Activated CD4-positive, alpha-beta memory T cell treated with anti-CD3 and anti-CD28 coated beads for 36 hours (primary cell): ENCODE measurements at regions of chr1 and their contacts with region 1.

Region 1: GRCh38 chr1:245045087-245045881 is 109.5 kb upstream of the KIF26B start:
- DNase-seq: no peak
- H3K4me3 Mint-ChIP-seq: no peak overlapping the region
- H3K27ac Mint-ChIP-seq: no peak overlapping the region
- H3K4me1 Mint-ChIP-seq: no peaks in the 10 kb centered on the region
- H3K27me3 Mint-ChIP-seq: no peaks in the 10 kb centered on the region

Region 2: GRCh38 chr1:244599937-244600350 is 445.3 kb before region 1 on chr1:
- CTCF ChIA-PET with region 1: interaction called, 39 read pairs
- POLR2A ChIA-PET with region 1: no interaction called
- intact Hi-C with region 1: loop called (anchors 1 kb)
- DNase-seq: peak; percentile 76
- H3K4me3 Mint-ChIP-seq: peak overlapping the region; percentile 70
- H3K27ac Mint-ChIP-seq: peak overlapping the region; percentile 88
- H3K4me1 Mint-ChIP-seq: peaks cover 24% of the 10 kb centered on the region
- H3K27me3 Mint-ChIP-seq: peaks cover 4% of the 10 kb centered on the region

Region 3: GRCh38 chr1:244801246-244801645 is 244.0 kb before region 1 on chr1:
- CTCF ChIA-PET with region 1: interaction called, 84 read pairs
- POLR2A ChIA-PET with region 1: interaction called, 5 read pairs
- intact Hi-C with region 1: loop called (anchors 1 kb)
- DNase-seq: peak; percentile 66
- H3K4me3 Mint-ChIP-seq: no peak overlapping the region
- H3K27ac Mint-ChIP-seq: no peak overlapping the region
- H3K4me1 Mint-ChIP-seq: peaks cover 2% of the 10 kb centered on the region
- H3K27me3 Mint-ChIP-seq: peaks cover 2% of the 10 kb centered on the region

Region 4: GRCh38 chr1:244843148-244843978 is 201.9 kb before region 1 on chr1:
- CTCF ChIA-PET with region 1: interaction called, 12 read pairs
- POLR2A ChIA-PET with region 1: interaction called, 6 read pairs
- intact Hi-C with region 1: no loop called
- DNase-seq: no peak
- H3K4me3 Mint-ChIP-seq: no peak overlapping the region
- H3K27ac Mint-ChIP-seq: peak overlapping the region; percentile 18
- H3K4me1 Mint-ChIP-seq: peaks cover 68% of the 10 kb centered on the region
- H3K27me3 Mint-ChIP-seq: no peaks in the 10 kb centered on the region

Region 5: GRCh38 chr1:244864253-244865027 is 180.8 kb before region 1 on chr1 and contains the start of gene HNRNPU:
- CTCF ChIA-PET with region 1: interaction called, 8 read pairs
- POLR2A ChIA-PET with region 1: interaction called, 3 read pairs
- intact Hi-C with region 1: loop called (anchors 2 kb)
- DNase-seq: peak; percentile 97
- H3K4me3 Mint-ChIP-seq: peak within 1 kb of the TSS; percentile 99
- H3K27ac Mint-ChIP-seq: peak within 1 kb of the TSS; percentile 97
- H3K4me1 Mint-ChIP-seq: peaks cover 38% of the 10 kb centered on the region
- H3K27me3 Mint-ChIP-seq: no peaks in the 10 kb centered on the region
- total RNA-seq, gene HNRNPU: 410 to 421 TPM

Region 6: DNA sequence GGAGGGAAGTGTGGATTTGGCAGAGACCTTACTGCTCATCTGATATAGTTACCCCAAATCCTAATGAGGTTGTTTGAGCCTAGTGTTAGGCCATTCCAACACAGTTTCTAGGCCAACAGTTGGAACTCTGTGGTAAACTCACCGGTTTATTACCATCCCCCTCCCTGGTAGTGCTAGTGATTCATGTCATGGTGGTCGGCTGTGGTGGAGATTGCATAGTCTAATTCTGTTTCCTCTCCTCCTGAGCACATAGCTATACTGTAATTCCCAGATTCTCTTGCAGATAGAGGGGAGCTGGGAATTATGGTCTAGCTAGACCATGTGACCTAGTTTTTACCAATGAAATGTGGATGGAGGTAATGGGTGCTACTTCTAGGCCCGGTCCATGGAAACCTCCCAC is 14.2 kb before region 1 on chr1:
- CTCF ChIA-PET with region 1: interaction called, 19 read pairs
- POLR2A ChIA-PET with region 1: no interaction called
- intact Hi-C with region 1: no loop called
- DNase-seq: no peak
- H3K4me3 Mint-ChIP-seq: no peak overlapping the region
- H3K27ac Mint-ChIP-seq: no peak overlapping the region
- H3K4me1 Mint-ChIP-seq: peaks cover 2% of the 10 kb centered on the region
- H3K27me3 Mint-ChIP-seq: no peaks in the 10 kb centered on the region

Region 7: GRCh38 chr1:245156081-245156735 is 110.9 kb after region 1 on chr1:
- CTCF ChIA-PET with region 1: no interaction called
- POLR2A ChIA-PET with region 1: no interaction called
- intact Hi-C with region 1: no loop called
- DNase-seq: peak; percentile 89
- H3K4me3 Mint-ChIP-seq: peak overlapping the region; percentile 56
- H3K27ac Mint-ChIP-seq: no peak overlapping the region
- H3K4me1 Mint-ChIP-seq: peaks cover 22% of the 10 kb centered on the region
- H3K27me3 Mint-ChIP-seq: peaks cover 55% of the 10 kb centered on the region